PC-9 (cell line): ENCODE measurements at regions of chr6 and their contacts with region 1.

Region 1: GRCh38 chr6:118893807-118894424 is at the start of gene ASF1A:
- DNase-seq: peak; percentile 95 to 96
- H3K4me3 ChIP-seq: peak within 1 kb of the TSS; percentile 92
- H3K27ac ChIP-seq: peak within 1 kb of the TSS; percentile 95
- H3K4me1 ChIP-seq: peaks cover 37% of the 10 kb centered on the region
- H3K27me3 ChIP-seq: no peaks in the 10 kb centered on the region
- CTCF ChIP-seq: peak; percentile 69
- total RNA-seq, gene ASF1A: 25.7 and 39.5 TPM in 2 replicates

Region 2: DNA sequence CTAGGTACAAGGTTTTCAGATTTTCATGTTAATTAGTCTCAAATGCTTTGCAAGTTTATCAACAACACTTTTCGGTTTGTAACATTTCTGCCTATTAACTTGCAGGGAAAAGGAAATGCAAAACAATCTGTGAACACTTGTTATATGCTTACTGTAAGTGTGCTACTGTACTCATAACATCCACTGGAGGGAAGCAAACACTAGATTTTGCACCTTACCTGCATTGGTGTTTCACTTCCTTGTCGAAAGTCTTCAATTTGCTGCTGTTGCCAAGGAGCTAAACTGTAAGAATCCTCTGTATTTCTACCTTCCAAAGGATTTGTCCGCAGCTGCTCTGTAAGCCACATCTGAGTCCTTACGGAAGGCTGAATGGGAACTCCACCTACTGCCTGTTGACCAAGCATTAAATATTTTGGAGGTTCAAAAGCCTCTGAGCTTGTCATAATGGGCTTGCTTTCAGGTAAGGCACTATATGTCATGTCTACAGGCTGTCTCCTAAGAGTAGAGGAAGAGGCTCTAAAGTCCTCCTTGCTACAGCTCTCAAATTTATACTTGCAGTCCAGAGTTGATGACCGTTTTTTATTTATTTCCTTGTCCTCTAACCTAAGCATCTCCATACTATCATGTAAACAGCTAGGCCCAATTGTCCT is 328.5 kb before region 1 on chr6:
- CTCF ChIA-PET with region 1: interaction called, 3 read pairs
- POLR2A ChIA-PET with region 1: no interaction called
- intact Hi-C with region 1: loop called (anchors 10 kb)
- DNase-seq: peak; percentile 3 to 72
- H3K4me3 ChIP-seq: no peak overlapping the region
- H3K27ac ChIP-seq: no peak overlapping the region
- H3K4me1 ChIP-seq: no peaks in the 10 kb centered on the region
- H3K27me3 ChIP-seq: no peaks in the 10 kb centered on the region
- CTCF ChIP-seq: peak; percentile 82

Region 3: DNA sequence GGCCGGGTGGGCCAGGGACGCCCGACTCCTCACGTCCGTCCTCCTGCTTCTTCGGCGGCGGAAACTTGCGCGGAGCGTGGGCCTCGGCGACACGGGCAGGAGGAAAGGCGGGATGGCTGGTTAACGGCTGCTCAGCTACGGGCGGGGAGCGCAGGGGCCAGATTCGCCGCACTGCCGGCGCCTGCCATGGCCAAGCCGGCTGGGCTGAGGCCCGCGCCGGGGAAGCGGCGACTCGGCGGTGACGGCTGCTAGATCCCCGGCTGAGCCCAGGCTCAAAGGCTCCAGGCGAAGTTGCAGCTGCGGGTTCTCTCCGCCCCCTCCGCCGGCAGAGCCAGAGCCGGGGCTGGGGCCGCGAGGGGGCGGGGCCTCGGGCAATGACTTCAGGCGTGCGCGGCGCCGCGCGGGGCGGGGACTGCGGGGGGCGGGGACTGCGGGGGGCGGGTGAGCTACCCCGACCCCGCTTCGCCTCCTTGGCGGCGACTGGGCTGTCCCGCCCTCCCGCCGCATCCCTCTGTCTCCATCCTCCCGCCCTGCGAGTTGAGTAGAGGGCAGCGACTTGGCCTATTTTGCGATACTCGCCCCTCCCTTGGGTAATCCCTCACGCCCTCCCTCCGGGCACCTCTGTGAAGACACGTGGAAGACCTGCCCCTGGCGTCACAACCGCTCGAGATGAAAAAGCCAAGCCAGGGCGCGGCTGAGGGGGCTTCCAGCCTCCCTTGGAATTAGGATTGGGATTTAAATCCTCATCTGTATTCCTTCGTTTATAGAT is 242.4 kb before region 1 on chr6 and contains the start of gene CEP85L:
- CTCF ChIA-PET with region 1: no interaction called
- POLR2A ChIA-PET with region 1: no interaction called
- intact Hi-C with region 1: loop called (anchors 5 kb)
- DNase-seq: peak; percentile 82 to 84
- H3K4me3 ChIP-seq: peak within 1 kb of the TSS; percentile 82
- H3K27ac ChIP-seq: peak within 1 kb of the TSS; percentile 30; the same call in 1 of the 2 replicates
- H3K4me1 ChIP-seq: peaks cover 23% of the 10 kb centered on the region
- H3K27me3 ChIP-seq: no peaks in the 10 kb centered on the region
- CTCF ChIP-seq: no peak
- total RNA-seq, gene CEP85L: 3.0 TPM in 2 replicates

Region 4: GRCh38 chr6:118800394-118801071 is 93.4 kb before region 1 on chr6:
- CTCF ChIA-PET with region 1: interaction called, 3 read pairs
- POLR2A ChIA-PET with region 1: no interaction called
- intact Hi-C with region 1: loop called (anchors 1 kb)
- DNase-seq: peak; percentile 60 to 75
- H3K4me3 ChIP-seq: no peak overlapping the region
- H3K27ac ChIP-seq: no peak overlapping the region
- H3K4me1 ChIP-seq: no peaks in the 10 kb centered on the region
- H3K27me3 ChIP-seq: no peaks in the 10 kb centered on the region
- CTCF ChIP-seq: peak; percentile 99

Region 5: GRCh38 chr6:118843685-118844390 is 50.1 kb before region 1 on chr6:
- CTCF ChIA-PET with region 1: no interaction called
- POLR2A ChIA-PET with region 1: no interaction called
- intact Hi-C with region 1: no loop called
- DNase-seq: no peak
- H3K4me3 ChIP-seq: no peak overlapping the region
- H3K27ac ChIP-seq: no peak overlapping the region
- H3K4me1 ChIP-seq: no peaks in the 10 kb centered on the region
- H3K27me3 ChIP-seq: no peaks in the 10 kb centered on the region
- CTCF ChIP-seq: no peak

Region 6: GRCh38 chr6:118859517-118860064 is 34.3 kb before region 1 on chr6:
- CTCF ChIA-PET with region 1: interaction called, 11 read pairs
- POLR2A ChIA-PET with region 1: no interaction called
- intact Hi-C with region 1: no loop called
- DNase-seq: no peak
- H3K4me3 ChIP-seq: no peak overlapping the region
- H3K27ac ChIP-seq: no peak overlapping the region
- H3K4me1 ChIP-seq: no peaks in the 10 kb centered on the region
- H3K27me3 ChIP-seq: no peaks in the 10 kb centered on the region
- CTCF ChIP-seq: no peak

Region 7: DNA sequence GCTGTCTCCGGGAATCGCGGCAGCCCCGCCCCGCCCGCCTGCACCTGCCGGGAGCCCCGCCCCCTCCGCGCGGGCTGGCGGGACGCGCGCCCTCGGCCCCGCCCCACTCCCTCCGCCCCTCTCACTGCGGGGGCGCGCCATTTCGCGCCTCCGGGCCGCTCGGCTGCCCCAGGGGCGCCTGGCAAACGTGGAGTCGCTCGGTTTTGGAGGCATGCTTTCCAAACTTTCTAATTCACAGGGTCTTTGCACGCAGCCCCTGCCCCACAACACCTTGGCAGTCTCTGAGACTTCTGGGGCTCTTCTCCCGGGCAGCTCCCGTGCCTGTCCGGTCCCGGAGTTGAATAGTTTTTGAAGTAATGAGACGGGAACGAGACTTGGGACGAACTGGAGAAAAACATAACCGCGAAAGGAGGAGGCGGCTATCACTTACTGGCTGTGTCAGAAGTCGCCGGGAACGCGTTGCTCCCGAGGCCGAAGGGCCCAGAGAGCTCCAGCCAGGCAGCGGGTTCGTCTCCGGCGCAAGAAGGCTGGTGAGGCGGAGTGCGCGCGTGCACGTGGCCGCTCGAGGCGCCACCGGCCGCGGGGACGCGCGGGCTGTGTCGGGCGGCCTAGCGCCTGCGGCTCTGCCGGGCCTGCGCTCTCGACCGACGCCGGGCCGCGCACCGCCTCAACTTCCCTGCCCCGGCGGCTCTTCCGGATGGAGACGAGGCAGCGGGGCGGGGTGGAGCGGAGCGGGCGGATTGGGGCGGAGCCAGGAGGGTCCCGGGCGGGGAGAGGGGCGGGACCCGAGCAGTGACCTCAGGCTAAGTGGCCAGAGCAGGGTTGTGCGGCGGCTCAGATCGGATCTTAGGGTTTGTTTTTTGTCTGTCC is 40.8 kb after region 1 on chr6 and contains the start of gene MCM9:
- CTCF ChIA-PET with region 1: no interaction called
- POLR2A ChIA-PET with region 1: interaction called, 6 read pairs
- intact Hi-C with region 1: loop called (anchors 1 kb)
- DNase-seq: peak; percentile 81 to 93
- H3K4me3 ChIP-seq: peak within 1 kb of the TSS; percentile 77
- H3K27ac ChIP-seq: peak within 1 kb of the TSS; percentile 83
- H3K4me1 ChIP-seq: peaks cover 44% of the 10 kb centered on the region
- H3K27me3 ChIP-seq: no peaks in the 10 kb centered on the region
- CTCF ChIP-seq: no peak
- total RNA-seq, gene MCM9: 14.4 and 18.1 TPM in 2 replicates

Region 8: DNA sequence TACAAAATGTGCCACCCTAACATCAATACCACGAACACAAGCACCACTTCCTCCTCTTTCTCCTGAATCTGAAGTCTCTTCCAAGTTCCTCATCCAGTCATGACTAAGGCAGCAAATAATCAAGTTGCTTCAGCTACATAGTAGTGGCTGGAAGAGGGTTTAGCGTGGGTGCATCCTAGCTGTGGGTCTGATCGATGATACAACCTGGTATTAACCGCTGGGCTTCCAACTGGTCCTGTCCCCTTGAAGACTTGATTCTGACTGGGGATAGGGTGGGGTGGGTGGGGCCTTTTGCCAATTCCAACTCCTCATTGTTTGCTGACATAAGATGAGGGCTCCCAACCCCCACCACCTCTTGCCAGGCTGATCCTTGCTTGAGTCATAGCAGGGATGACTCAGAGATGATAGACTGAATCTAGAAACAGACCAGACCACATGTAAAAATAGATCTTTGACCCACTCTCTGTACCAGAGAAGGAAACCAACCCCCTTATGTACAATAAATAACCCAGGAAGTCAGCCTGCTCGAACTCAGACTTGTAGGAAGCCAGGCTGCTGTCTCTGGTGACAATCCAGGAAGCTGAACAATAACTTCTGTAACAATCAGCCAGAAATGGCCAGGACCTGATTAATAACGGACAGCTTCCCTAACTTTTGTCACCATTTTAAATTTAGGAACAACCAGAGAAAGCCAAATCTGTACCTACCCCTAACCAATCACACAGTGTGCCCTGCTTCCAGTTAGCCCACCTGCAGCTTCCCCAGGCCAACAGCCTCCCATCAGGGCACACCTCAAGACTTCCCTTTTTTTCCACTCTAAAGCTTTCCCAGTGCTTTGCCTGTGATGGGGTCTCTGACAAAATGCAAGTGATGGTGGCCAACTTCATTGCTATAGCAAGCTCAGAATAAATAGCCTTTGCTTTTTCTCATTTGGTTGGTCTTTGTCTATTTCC is 253.5 kb after region 1 on chr6:
- CTCF ChIA-PET with region 1: no interaction called
- POLR2A ChIA-PET with region 1: no interaction called
- intact Hi-C with region 1: no loop called
- DNase-seq: peak; percentile 78 to 99
- H3K4me3 ChIP-seq: no peak overlapping the region
- H3K27ac ChIP-seq: peak overlapping the region; percentile 75
- H3K4me1 ChIP-seq: peaks cover 43% of the 10 kb centered on the region
- H3K27me3 ChIP-seq: no peaks in the 10 kb centered on the region
- CTCF ChIP-seq: no peak

Region 9: GRCh38 chr6:120354447-120355098 is 1460.7 kb after region 1 on chr6:
- CTCF ChIA-PET with region 1: no interaction called
- POLR2A ChIA-PET with region 1: no interaction called
- intact Hi-C with region 1: no loop called
- DNase-seq: peak in 1 of 2 experiments; percentile 13
- H3K4me3 ChIP-seq: no peak overlapping the region
- H3K27ac ChIP-seq: no peak overlapping the region
- H3K4me1 ChIP-seq: 0 out of 2 replicates have a peak, but pooled peaks cover 11% of the 10 kb centered on the region
- H3K27me3 ChIP-seq: no peaks in the 10 kb centered on the region
- CTCF ChIP-seq: no peak